ENCODE measurements at regions of chr11 and their contacts with region 1.

Region 1: GRCh38 chr11:18395735-18396504 is 1.6 kb downstream of the LDHA start:
- DNase-seq: peak; percentile 99
- H3K4me3 ChIP-seq: peak overlapping the region; percentile 72 to 98 (median 93)
- H3K27ac ChIP-seq: peak overlapping the region; percentile 98 to 100 (median 99)
- H3K4me1 ChIP-seq: peaks cover 0 to 28% (median 19%) of the 10 kb centered on the region in 4 donors
- H3K27me3 ChIP-seq: no peaks in the 10 kb centered on the region
- CTCF ChIP-seq: no peak
- EP300 ChIP-seq: peak in 2 of 4 donors; percentile 36 to 65
- POLR2A ChIP-seq: peak; percentile 74 to 80

Region 2: DNA sequence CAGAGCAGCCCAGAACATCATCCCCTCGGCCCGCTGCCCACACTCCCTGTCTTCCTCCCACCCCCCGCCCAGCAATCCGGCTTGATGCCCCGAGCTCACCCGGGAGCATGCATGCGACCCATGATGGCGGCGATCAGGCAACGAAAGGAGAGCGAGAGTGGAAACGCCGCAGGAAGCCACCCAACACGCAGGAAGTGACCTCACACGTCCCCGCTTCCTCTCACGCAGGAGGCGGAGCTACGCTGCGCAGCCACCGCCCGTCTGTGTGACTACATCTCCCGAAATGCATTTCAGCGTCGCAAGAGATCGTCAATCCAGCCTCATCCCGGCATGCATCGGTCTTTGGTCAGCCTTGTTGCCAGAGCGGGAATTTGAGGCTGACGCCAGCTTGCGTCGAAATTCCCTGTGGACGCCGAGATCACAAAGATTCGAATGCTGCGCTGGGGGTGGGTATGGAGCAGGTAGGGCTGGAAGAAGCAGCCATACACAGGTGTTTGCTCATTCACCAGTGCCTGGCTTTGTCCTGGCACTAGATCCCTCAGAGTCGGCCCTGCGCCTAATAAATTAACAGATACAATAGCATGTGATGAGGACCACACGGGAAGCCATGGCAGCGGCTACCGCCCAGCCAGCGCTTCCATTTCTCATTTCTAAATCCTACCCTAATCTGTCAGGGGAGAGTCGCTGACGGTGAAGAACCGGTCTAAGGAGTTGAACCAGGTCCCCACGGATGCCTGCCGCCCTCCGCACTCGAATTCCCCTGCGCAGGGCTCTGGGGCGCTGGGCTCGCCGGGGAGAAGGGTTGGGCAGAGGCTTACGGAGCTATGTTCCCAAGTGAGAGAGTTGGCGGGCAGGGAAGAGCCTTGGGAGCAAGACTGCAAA is 1318.2 kb before region 1 on chr11 and contains the start of gene RPS13:
- intact Hi-C with region 1: loop called (anchors 5 kb)
- DNase-seq: peak; percentile 99
- H3K4me3 ChIP-seq: peak within 1 kb of the TSS; percentile 81 to 93 (median 86)
- H3K27ac ChIP-seq: peak within 1 kb of the TSS; percentile 86 to 96 (median 94)
- H3K4me1 ChIP-seq: peaks cover 0 to 33% (median 25%) of the 10 kb centered on the region in 4 donors
- H3K27me3 ChIP-seq: no peaks in the 10 kb centered on the region
- CTCF ChIP-seq: no peak
- EP300 ChIP-seq: peak in 1 of 4 donors; percentile 83
- POLR2A ChIP-seq: peak; percentile 62 to 70
- total RNA-seq, gene RPS13: 1,670 to 3,514 (median 2,481) TPM

Region 3: GRCh38 chr11:18383388-18384156 is 12.3 kb before region 1 on chr11:
- intact Hi-C with region 1: loop called (anchors 1 kb)
- DNase-seq: peak; percentile 93
- H3K4me3 ChIP-seq: peak overlapping the region in 1 of 4 donors; percentile 1
- H3K27ac ChIP-seq: peak overlapping the region; percentile 87 to 98 (median 96)
- H3K4me1 ChIP-seq: peaks cover 0 to 30% (median 29%) of the 10 kb centered on the region in 4 donors
- H3K27me3 ChIP-seq: no peaks in the 10 kb centered on the region
- CTCF ChIP-seq: no peak
- EP300 ChIP-seq: peak in 1 of 4 donors; percentile 19
- POLR2A ChIP-seq: no peak

Region 4: DNA sequence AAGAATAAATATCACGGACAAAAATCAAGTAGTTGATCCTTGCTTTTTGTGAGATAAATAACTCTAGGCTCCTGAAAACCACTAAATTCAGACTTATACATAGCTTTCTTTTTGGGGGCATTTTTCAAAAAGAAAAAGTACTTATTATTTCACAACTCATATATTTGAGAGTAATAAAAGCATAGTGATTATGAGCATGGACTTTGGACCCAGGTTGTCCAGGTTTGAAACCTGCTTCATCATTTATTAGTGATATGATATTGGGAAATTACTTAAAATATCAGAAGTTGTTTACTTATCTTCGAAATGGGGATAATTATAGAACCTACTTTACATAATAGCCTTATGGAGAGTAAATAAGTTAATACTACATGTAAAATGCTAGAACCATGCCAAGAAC is 42.8 kb after region 1 on chr11:
- intact Hi-C with region 1: no loop called
- DNase-seq: no peak
- H3K4me3 ChIP-seq: no peak overlapping the region
- H3K27ac ChIP-seq: no peak overlapping the region
- H3K4me1 ChIP-seq: no peaks in the 10 kb centered on the region
- H3K27me3 ChIP-seq: no peaks in the 10 kb centered on the region
- CTCF ChIP-seq: no peak
- EP300 ChIP-seq: no peak
- POLR2A ChIP-seq: no peak

Region 5: GRCh38 chr11:18588297-18589252 is 192.7 kb after region 1 on chr11 and contains the start of gene UEVLD:
- intact Hi-C with region 1: loop called (anchors 5 kb)
- DNase-seq: peak; percentile 96
- H3K4me3 ChIP-seq: peak within 1 kb of the TSS; percentile 70 to 88 (median 84)
- H3K27ac ChIP-seq: peak within 1 kb of the TSS; percentile 85 to 88 (median 86)
- H3K4me1 ChIP-seq: peaks cover 0 to 40% (median 35%) of the 10 kb centered on the region in 4 donors
- H3K27me3 ChIP-seq: no peaks in the 10 kb centered on the region
- CTCF ChIP-seq: no peak
- EP300 ChIP-seq: peak in 1 of 4 donors; percentile 35
- POLR2A ChIP-seq: peak; percentile 72 to 75
- total RNA-seq, gene UEVLD: 22.3 to 40.3 (median 28.8) TPM

Region 6: GRCh38 chr11:18698341-18699268 is 302.7 kb after region 1 on chr11 and contains the start of gene TMEM86A:
- intact Hi-C with region 1: loop called (anchors 5 kb)
- DNase-seq: peak; percentile 97
- H3K4me3 ChIP-seq: peak within 1 kb of the TSS; percentile 62 to 98 (median 78)
- H3K27ac ChIP-seq: peak within 1 kb of the TSS; percentile 76 to 82 (median 77)
- H3K4me1 ChIP-seq: peaks cover 3 to 18% (median 15%) of the 10 kb centered on the region in 4 donors
- H3K27me3 ChIP-seq: no peaks in the 10 kb centered on the region
- CTCF ChIP-seq: no peak
- EP300 ChIP-seq: no peak
- POLR2A ChIP-seq: peak in 1 of 2 donors; percentile 43
- total RNA-seq, gene TMEM86A: 3.7 to 5.3 (median 4.8) TPM

Region 7: GRCh38 chr11:18710545-18710944 is 314.6 kb after region 1 on chr11:
- intact Hi-C with region 1: no loop called
- DNase-seq: no peak
- H3K4me3 ChIP-seq: no peak overlapping the region
- H3K27ac ChIP-seq: no peak overlapping the region
- H3K4me1 ChIP-seq: peaks cover 0 to 15% (median 13%) of the 10 kb centered on the region in 4 donors
- H3K27me3 ChIP-seq: no peaks in the 10 kb centered on the region
- CTCF ChIP-seq: no peak
- EP300 ChIP-seq: no peak
- POLR2A ChIP-seq: no peak

Measured in sigmoid colon (tissue), 7 donors.